ENCODE measurements at regions of chr5 and their contacts with region 1.

Region 1: DNA sequence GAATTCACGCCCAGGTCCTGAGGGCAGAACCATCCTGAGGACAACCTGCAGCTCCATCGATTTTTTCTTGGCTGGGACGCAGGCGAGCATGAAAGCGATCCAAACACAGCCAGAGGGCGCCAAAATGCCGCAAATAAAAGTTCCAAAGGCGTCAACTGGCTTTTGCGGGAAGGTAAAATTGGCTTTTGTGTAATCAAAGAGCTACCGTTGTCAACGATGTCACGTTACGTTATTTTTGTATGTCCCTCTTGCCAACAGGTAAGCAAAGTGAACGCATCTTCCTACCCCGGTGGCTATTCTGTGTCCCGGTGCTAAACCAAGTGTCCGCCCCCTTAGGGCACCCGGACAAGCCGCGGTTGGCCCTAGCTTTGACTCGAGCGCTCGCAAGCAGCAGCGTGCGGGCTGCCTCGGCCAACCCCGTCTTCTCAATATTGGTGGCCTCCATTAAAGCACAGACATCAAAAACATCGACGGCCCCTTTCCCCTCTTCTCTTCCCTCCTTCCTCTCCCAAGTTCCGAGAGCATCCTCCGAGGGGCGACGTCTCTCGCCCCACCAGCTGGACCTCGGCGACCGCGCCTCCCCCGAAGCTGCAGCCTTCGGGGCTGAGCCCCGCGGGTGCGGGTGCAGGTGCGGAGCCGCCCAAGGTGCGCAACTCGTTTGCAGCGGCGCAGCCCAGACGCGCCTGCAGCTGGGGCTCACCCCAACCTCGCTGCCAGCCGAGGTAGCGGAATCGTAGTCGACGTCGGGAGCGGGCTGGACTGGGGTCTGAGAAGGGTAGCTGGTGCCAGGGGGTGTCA is 1.1 kb upstream of the BASP1 start:
- DNase-seq: peak; percentile 70 to 89 (median 82)
- ATAC-seq: peak; percentile 61
- H3K4me3 ChIP-seq: no peak overlapping the region
- H3K4me1 ChIP-seq: peaks cover 9% of the 10 kb centered on the region
- CTCF ChIP-seq: peak; percentile 63

Region 2: DNA sequence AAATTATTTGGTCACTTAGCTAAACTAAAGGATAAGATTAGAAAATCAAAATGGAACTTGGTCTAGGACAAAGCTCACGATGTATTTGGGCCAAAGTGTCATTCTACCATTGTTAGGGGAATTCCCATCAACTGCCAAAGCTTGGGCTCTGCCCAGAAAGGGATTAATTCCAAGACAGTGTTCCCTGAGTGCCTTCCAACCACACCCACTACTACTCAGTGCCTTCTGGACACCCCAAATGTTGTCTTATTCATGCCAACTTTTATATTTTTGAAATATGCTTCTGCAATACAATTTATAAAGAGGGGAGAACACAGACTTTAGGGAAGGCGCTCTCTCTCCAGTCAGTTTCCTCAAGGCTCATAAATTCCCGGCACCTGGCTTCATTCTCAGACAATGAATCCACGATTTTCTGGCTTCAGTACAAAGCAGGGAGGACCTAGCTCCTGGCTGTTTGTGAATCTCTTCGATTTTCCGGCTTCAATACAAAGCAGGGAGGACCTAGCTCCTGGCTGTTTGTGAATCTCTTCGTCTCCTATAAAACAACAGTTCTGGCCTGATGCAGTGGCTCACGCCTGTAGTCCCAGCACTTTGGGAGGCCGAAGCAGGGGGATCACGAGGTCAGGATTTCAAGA is 160.2 kb before region 1 on chr5:
- intact Hi-C with region 1: no loop called
- DNase-seq: peak in 1 of 3 donors; percentile 19
- ATAC-seq: peak; percentile 90
- H3K4me3 ChIP-seq: no peak overlapping the region
- H3K4me1 ChIP-seq: no peaks in the 10 kb centered on the region
- CTCF ChIP-seq: no peak

Region 3: DNA sequence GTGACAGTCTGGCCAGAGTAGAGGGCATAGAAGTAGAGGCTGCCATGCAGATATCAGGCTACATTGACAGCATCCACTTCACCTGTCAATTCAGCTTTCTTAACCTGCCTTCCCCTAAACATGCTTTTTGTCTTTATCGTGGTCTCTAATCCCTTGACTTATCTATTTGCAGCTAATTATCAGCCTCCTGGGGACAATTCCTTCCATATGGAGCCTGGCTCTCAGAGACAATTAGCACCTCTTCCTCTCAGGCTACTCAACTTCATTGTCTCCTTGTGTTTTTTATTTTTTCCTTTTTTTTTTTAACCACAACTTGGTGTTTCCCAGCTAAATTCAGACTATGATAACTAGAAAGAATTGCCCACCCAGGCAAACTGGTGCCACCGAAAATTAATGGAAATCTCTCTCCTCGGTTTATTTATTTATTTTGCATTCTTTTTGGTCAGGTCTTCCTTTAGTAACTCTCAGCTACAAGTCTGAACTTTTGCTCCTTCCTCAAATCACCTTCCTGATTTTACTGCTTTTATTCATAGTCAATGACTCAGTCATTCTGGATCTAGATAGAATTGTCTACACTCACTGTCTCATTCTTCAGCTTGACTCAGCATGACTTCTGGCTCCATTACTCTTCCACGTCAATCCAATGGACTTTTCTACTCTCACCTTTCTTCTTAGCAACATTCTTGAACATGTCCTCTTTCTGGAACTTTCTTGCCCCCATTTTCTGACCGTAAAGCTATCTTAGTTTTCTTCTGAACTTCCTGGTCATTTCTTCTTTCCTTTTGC is 62.0 kb before region 1 on chr5:
- intact Hi-C with region 1: no loop called
- DNase-seq: no peak
- ATAC-seq: peak; percentile 62
- H3K4me3 ChIP-seq: no peak overlapping the region
- H3K4me1 ChIP-seq: no peaks in the 10 kb centered on the region
- CTCF ChIP-seq: no peak

Region 4: GRCh38 chr5:18305297-18305924 is 1089.0 kb after region 1 on chr5:
- intact Hi-C with region 1: loop called (anchors 5 to 10 kb)
- DNase-seq: peak in 1 of 3 donors; percentile 15
- ATAC-seq: peak; percentile 47
- H3K4me3 ChIP-seq: no peak overlapping the region
- H3K4me1 ChIP-seq: no peaks in the 10 kb centered on the region
- CTCF ChIP-seq: peak; percentile 51

Region 5: DNA sequence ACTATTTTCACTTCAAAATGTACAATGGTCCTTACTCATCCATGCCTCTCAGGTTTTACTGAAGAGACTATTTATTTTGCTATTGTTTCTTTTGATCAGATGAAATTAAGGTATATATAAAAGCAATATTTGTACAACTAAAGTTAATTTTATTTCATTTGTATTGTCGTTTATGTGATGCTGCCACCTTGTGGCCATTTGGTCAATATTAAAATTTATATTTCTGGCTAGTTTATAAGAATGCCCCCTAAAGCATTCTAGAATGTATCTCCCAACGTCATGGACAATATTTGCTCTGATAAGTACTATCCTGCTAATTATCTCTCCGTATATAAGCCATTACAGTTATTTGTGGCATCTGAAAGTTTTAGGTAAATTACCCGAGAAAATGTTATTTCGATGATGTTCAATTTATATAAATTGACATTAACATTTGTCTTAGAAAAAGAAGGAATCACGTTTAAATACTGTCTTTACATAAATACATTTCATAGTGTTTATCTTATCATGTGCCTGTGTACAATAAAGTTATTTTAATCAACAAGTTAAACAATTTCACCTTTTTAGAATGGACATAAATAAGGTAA is 1097.9 kb after region 1 on chr5:
- intact Hi-C with region 1: loop called (anchors 5 to 10 kb)
- DNase-seq: peak in 1 of 3 donors; percentile 33
- ATAC-seq: no peak
- H3K4me3 ChIP-seq: no peak overlapping the region
- H3K4me1 ChIP-seq: no peaks in the 10 kb centered on the region
- CTCF ChIP-seq: no peak

Measured in mucosa of descending colon (tissue), 3 donors.